ENCODE measurements at regions of chr6 and their contacts with region 1.

Region 1: DNA sequence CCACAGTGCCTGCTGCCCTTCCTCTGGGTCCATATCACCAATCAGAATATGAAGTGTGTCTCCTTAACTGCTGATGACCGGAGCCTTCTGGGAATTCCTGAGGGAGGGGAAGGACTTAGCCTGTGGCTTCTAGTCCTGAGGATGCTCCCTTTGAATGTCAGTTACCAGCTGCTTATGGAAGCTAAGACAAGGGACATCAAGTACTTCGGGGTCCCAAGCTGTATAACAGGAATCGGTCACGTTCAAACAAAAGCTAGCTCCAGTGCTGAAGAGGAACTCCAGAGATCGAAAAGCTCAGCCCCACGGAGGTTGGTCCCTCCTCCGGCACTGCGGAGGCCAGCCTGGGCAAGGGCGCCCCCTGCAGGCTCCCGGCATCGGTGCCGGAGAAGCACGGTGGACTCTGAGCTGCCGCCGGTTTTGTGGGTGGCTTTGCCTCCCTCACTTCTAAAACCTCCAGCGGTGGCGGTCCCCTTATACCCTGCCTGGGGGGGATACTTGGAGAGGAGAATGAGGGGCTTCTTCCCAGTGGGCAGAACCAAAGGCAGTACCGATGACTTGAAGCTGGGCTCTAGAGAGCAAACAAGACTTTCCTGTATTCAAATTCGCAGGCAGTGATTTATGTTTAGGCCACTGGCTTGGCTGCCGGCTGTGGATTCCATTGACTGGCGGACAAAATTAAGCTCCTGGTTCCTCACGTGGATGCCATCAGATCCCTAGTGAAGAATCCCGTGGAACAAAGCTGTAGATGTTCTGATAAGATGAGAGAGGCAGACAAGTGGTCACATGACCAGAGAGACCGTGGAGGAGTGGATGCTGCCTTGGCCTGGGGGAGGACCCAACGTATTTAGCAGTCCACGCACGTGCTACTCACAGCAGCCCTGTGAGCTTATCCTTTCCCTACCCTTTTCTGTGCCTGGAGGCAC is 16.2 kb upstream of the UBR2 start:
- DNase-seq: peak; percentile 90
- ATAC-seq: peak; percentile 100
- H3K4me3 Mint-ChIP-seq: peak overlapping the region; percentile 57
- H3K27ac Mint-ChIP-seq: no peak overlapping the region
- H3K4me1 Mint-ChIP-seq: peaks cover 13% of the 10 kb centered on the region
- H3K27me3 Mint-ChIP-seq: peaks cover 12% of the 10 kb centered on the region

Region 2: DNA sequence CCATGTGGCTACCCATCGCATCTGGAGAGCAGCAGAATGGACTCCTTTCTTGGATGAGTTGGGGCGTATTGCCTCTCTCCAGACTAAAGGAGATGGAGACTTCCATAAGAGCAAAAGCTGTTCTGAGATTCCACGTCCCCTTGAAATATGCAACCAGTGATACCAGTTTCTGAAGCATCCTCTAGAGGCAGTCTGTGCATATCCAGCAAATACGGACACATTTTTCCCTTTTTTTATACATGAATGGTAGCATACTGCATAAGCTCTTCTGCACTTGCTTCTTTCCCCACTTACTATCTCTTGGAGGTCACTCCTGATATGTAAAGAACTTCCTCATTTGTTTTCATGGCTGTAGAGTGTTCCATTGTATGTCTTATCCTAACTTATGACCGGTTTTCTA is 462.8 kb before region 1 on chr6:
- CTCF ChIA-PET with region 1: no interaction called
- POLR2A ChIA-PET with region 1: no interaction called
- DNase-seq: no peak
- ATAC-seq: no peak
- H3K4me3 Mint-ChIP-seq: no peak overlapping the region
- H3K27ac Mint-ChIP-seq: no peak overlapping the region
- H3K4me1 Mint-ChIP-seq: no peaks in the 10 kb centered on the region
- H3K27me3 Mint-ChIP-seq: no peaks in the 10 kb centered on the region

Region 3: DNA sequence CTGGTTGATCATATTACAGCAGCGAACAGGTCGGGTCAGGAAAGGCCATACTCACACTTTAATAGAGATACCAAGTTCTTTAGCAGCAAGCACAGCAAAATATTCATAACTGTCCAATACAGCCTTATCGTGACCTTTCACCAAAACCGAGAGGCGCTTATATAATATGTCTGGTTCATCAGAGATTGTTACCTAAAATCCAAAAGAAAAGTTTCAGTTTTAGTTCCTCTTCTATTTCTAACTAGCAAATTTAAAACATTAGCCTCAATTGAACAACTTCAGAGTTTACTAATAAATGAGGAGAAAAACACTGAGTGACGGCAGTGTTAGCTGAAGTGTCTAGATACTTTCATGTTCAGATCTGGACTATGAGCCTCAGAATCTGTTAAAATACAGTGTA is 335.9 kb before region 1 on chr6:
- CTCF ChIA-PET with region 1: interaction called, 59 read pairs
- POLR2A ChIA-PET with region 1: interaction called, 6 read pairs
- DNase-seq: no peak
- ATAC-seq: no peak
- H3K4me3 Mint-ChIP-seq: no peak overlapping the region
- H3K27ac Mint-ChIP-seq: no peak overlapping the region
- H3K4me1 Mint-ChIP-seq: peaks cover 20% of the 10 kb centered on the region
- H3K27me3 Mint-ChIP-seq: no peaks in the 10 kb centered on the region

Region 4: DNA sequence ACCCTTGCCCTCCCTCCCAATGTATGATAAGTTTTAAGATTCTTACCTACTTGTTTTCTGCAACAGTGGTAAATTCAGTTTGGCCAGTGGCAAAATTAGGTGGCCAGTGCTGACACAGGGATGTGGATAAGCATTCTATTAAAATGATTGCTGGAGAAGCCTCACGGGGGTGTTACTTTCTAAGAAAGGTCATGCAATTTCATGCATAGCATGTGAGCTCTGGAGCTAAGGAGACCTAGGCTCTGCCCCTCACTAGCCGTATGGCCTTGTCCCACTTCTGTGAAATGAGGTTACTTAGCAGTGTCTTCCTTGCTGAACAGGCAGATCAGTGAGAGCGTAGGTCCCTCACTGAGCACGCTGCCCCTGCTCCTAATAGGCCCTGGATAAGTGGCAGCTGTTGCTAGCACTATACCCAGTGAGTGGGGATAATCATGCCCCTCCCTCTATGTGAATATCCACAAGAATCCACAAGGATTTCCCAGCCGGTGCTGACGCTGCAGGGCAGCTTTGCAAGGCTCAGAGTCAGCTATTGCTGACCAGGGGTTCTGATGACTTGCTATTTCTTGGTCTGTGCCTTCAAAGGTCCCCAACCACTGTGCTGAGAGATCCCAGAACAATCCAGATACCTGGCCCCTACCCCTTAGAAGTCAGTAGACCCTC is 243.5 kb before region 1 on chr6:
- CTCF ChIA-PET with region 1: interaction called, 57 read pairs
- POLR2A ChIA-PET with region 1: no interaction called
- DNase-seq: no peak
- ATAC-seq: no peak
- H3K4me3 Mint-ChIP-seq: no peak overlapping the region
- H3K27ac Mint-ChIP-seq: no peak overlapping the region
- H3K4me1 Mint-ChIP-seq: no peaks in the 10 kb centered on the region
- H3K27me3 Mint-ChIP-seq: no peaks in the 10 kb centered on the region

Region 5: GRCh38 chr6:42390228-42390934 is 157.3 kb before region 1 on chr6:
- CTCF ChIA-PET with region 1: interaction called, 29 read pairs
- POLR2A ChIA-PET with region 1: no interaction called
- DNase-seq: peak; percentile 68
- ATAC-seq: peak; percentile 79
- H3K4me3 Mint-ChIP-seq: peak overlapping the region; percentile 69
- H3K27ac Mint-ChIP-seq: peak overlapping the region; percentile 96
- H3K4me1 Mint-ChIP-seq: peaks cover 85% of the 10 kb centered on the region
- H3K27me3 Mint-ChIP-seq: no peaks in the 10 kb centered on the region

Region 6: DNA sequence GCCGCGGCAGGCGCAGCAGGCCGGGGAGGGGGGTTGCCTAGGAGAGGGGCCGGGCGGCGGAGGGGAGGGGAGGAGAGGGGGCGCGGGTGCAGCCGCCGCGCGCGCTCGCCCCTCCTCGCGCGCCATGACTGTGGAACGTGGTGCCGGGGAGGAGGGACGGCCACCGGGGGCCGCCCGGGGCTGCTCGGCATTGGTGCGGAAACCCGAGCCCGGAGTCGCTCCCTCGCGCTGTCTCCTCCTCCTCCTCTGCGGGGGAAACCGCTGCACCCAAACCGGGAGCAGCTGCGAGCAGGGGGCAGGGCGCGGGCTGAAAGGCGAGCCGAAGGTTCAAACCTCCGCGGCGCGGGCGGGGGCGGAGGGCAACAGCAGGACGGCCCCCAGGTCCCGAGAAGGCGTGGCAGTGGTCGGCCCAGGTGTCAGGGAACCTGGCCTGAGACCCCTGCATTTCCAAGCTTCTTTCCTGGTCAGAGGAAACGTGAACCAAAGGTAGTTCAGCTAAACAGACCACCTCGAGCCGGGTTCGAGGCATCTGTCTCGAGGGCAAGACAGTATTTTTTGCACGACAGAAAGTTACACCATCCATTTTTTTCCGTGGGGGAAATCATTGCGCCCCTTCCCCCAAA is 94.5 kb before region 1 on chr6:
- CTCF ChIA-PET with region 1: interaction called, 21 read pairs
- POLR2A ChIA-PET with region 1: interaction called, 5 read pairs
- DNase-seq: peak; percentile 84
- ATAC-seq: peak; percentile 79
- H3K4me3 Mint-ChIP-seq: peak overlapping the region; percentile 91
- H3K27ac Mint-ChIP-seq: peak overlapping the region; percentile 30
- H3K4me1 Mint-ChIP-seq: peaks cover 38% of the 10 kb centered on the region
- H3K27me3 Mint-ChIP-seq: peaks cover 13% of the 10 kb centered on the region

Region 7: DNA sequence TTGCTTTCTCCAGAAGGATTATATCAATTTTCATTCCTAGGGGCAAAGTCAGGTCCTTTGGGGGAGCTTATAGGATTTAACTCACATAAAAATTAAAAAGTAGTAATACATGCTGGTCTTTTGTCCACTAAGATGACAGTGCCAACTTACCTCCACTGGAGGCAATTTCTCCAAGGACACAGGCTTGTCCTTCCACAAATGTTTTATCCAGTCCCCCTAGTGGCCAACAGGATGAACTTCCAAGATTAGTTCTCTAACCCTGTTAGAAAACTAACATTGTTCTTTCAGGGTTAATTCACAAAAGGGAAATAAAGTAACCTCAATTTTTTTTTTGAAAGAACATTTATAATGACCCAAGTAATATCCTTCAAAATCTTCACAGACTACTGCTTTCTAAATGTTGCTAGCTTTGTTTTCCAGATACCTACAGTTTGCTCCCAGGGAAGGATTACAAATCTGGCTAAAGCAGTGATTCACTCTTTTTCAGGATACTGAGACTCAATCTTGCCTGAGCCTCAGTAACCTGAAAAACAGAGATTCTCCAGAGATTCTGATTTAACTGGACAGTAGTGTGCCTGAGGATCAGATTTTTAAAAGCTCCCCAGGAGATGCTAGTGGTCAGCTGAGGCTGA is 15.5 kb before region 1 on chr6:
- CTCF ChIA-PET with region 1: interaction called, 94 read pairs
- POLR2A ChIA-PET with region 1: interaction called, 3 read pairs
- DNase-seq: peak; percentile 43
- ATAC-seq: peak; percentile 63
- H3K4me3 Mint-ChIP-seq: no peak overlapping the region
- H3K27ac Mint-ChIP-seq: no peak overlapping the region
- H3K4me1 Mint-ChIP-seq: no peaks in the 10 kb centered on the region
- H3K27me3 Mint-ChIP-seq: peaks cover 6% of the 10 kb centered on the region

Region 8: DNA sequence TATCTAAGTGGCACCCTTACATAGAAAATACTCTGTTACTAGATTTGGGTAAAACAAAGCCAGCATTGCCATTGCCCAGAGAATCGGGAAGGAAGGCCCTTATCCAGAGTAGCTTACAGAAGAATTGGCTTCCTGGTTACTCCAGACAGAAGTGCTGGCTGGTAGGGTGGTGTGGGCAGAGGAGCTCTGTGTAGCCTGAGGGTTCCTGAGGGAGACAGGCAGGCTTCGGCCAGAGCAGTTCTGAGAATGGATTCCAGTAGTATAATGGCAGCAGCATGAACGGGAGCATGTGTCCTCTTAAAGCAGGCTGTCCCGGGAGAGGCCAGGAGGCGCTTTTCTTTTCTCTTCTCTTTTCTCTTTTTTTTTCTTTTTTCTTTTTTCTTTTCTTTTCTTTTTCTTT is 646.3 kb after region 1 on chr6:
- CTCF ChIA-PET with region 1: no interaction called
- POLR2A ChIA-PET with region 1: no interaction called
- DNase-seq: no peak
- ATAC-seq: no peak
- H3K4me3 Mint-ChIP-seq: no peak overlapping the region
- H3K27ac Mint-ChIP-seq: no peak overlapping the region
- H3K4me1 Mint-ChIP-seq: no peaks in the 10 kb centered on the region
- H3K27me3 Mint-ChIP-seq: no peaks in the 10 kb centered on the region